Astrocyte of the cerebellum (primary cell): ENCODE measurements at regions of chr1 and their contacts with region 1.

Region 1: GRCh38 chr1:197787052-197787451 is 11.8 kb upstream of the DENND1B start:
- DNase-seq: no peak
- H3K4me3 ChIP-seq: no peak overlapping the region
- CTCF ChIP-seq: no peak

Region 2: DNA sequence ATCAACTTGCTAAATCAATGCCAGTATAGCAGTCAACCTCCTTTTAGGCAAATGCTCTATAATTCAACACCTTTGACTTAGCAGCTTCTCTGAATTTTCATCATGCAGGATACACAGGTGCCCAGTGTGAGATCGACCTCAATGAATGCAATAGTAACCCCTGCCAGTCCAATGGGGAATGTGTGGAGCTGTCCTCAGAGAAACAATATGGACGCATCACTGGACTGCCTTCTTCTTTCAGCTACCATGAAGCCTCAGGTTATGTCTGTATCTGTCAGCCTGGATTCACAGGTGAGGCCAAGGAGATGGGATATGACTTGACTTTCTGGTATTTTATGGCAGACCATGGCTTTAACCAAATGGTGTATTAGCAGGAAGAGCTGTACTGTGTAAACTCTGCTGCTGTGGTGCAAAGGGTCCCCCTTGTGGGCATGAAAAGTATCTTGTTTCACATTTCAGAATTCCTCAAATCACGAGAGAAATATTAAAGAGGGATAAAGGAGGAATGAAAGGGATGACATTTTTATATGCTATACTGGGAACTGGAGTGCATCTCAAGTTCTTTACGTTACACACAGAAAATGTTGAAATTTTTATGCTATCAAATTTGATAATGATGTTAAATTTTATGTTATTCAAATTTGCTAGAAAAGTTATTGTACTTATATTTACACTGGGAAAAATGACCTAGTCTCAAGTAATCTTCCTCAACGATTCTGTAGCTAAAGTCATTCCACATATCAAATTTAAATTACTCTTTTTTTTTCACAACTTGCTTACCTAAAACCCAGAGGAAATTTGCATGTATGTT is 430.1 kb before region 1 on chr1:
- in situ Hi-C with region 1: no loop called
- DNase-seq: peak; percentile 43
- H3K4me3 ChIP-seq: no peak overlapping the region
- CTCF ChIP-seq: peak; percentile 71

Region 3: GRCh38 chr1:197744979-197745378 is 42.1 kb before region 1 on chr1:
- in situ Hi-C with region 1: no loop called
- DNase-seq: no peak
- H3K4me3 ChIP-seq: no peak overlapping the region
- CTCF ChIP-seq: no peak

Region 4: GRCh38 chr1:197825541-197825940 is 38.5 kb after region 1 on chr1:
- in situ Hi-C with region 1: loop called (anchors 5 kb)
- DNase-seq: no peak
- H3K4me3 ChIP-seq: no peak overlapping the region
- CTCF ChIP-seq: no peak